ENCODE measurements at regions of chr7 and their contacts with region 1.

Region 1: GRCh38 chr7:152336754-152337368 is 98.9 kb downstream of the KMT2C start:
- DNase-seq: peak in 1 of 2 donors; percentile 26
- ATAC-seq: peak; percentile 76 to 80
- H3K4me3 ChIP-seq: peak overlapping the region in 1 of 4 donors; percentile 34
- H3K27ac ChIP-seq: no peak overlapping the region
- H3K4me1 ChIP-seq: peaks cover 49 to 51% of the 10 kb centered on the region in 2 donors
- H3K27me3 ChIP-seq: no peaks in the 10 kb centered on the region
- CTCF ChIP-seq: peak; percentile 29 to 59 (median 56)
- POLR2A ChIP-seq: no peak

Region 2: DNA sequence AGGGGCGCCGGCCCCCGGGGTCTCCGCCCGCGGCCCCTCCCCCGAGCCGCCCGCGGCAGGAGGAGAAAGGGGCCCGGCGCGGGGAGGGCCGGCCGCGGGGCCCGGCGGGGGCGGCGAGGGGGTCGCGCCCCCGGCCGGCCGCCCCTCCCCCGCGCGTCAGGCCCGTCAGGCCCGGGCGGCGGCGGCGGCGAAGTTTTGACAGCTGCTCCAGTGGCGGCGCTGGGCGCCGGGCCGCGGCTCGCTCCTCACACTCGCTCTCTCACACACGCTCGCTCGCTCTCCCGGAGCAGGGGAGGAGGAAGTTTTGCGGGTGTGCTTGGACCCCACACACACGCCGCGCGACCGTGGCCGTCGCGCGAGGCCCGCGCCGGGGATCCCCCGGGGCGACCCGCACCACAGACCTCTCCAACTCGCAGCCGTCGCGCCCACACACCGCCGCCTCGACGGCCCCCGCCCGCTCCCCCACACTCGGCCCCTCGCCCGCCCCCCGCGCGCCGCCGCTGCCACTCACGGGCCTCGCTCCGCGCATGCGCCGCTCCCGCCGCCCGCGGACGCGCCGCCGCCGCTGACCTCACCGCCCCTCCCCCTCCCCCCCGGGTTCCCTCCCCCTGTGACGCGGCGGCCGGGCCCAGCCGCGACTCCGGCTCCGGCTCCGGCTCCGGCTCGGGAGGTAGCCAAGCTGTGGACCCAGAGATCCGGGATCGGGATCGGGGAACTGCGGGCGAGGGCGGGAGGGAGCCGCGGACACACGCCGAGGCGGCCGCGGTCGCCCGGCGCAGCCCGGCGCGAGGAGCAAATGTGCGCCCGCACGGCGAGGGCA is 99.5 kb after region 1 on chr7:
- in situ Hi-C with region 1: no loop called
- intact Hi-C with region 1: loop called (anchors 2 kb)
- DNase-seq: peak; percentile 90 to 94
- ATAC-seq: peak; percentile 66 to 70
- H3K4me3 ChIP-seq: peak overlapping the region; percentile 60 to 99 (median 82)
- H3K27ac ChIP-seq: peak overlapping the region; percentile 92 to 100 (median 99)
- H3K4me1 ChIP-seq: peaks cover 24 to 40% of the 10 kb centered on the region in 2 donors
- H3K27me3 ChIP-seq: no peaks in the 10 kb centered on the region
- CTCF ChIP-seq: no peak
- POLR2A ChIP-seq: peak; percentile 57 to 59

Region 3: DNA sequence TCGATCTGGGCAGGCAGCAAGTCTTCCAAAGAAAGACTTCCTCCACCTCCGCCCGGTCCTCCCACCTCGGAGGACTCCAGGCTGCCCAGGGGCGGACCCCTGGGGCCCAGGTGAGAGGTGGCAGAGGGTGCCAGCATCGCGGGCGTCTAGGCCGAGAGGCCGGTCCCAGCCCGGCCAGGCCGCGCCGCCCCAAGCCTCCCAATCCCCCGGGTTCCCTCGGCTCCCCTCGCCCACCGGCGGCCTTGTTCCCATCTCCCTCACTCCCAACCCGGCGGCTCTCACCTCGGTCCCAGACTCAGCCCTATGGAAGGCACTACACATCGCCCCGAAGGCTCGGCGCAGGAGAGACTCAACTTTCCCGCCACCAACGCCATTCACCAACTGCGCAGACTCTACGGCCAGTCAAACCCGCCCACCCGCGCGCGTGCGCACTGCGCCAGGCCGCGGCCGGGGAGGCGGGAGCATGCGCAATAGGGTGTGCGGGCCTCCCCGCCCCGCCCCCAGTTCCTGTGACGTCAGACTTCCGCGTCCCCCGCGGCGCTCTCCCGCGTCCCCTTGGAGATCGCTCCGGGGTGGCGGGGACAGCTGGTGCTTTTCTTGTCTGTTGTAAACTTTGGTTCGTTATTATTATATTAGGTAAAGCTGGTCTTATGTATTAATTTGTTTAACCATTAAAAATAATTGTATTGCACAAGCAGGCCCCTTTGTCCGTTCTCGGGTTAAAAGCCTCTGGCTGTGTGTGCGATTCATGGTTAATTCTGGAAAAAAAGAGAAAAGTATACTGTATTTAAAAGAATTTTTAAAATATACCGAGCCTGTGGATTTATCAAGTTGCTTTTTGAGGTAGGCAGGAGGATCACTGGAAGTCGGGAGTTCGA is 339.1 kb after region 1 on chr7 and contains the start of gene XRCC2:
- in situ Hi-C with region 1: loop called in 1 of 4 experiments (anchors 25 kb)
- intact Hi-C with region 1: no loop called
- DNase-seq: peak; percentile 81 to 86
- ATAC-seq: peak; percentile 99
- H3K4me3 ChIP-seq: peak within 1 kb of the TSS; percentile 67 to 78 (median 70)
- H3K27ac ChIP-seq: peak within 1 kb of the TSS; percentile 85 to 87 (median 86)
- H3K4me1 ChIP-seq: peaks cover 7 to 12% of the 10 kb centered on the region in 2 donors
- H3K27me3 ChIP-seq: no peaks in the 10 kb centered on the region
- CTCF ChIP-seq: no peak
- POLR2A ChIP-seq: peak; percentile 56 to 68
- total RNA-seq, gene XRCC2: 0.07 to 0.41 (median 0.20) TPM in 3 of 4 donors, not detected in the other

Region 4: DNA sequence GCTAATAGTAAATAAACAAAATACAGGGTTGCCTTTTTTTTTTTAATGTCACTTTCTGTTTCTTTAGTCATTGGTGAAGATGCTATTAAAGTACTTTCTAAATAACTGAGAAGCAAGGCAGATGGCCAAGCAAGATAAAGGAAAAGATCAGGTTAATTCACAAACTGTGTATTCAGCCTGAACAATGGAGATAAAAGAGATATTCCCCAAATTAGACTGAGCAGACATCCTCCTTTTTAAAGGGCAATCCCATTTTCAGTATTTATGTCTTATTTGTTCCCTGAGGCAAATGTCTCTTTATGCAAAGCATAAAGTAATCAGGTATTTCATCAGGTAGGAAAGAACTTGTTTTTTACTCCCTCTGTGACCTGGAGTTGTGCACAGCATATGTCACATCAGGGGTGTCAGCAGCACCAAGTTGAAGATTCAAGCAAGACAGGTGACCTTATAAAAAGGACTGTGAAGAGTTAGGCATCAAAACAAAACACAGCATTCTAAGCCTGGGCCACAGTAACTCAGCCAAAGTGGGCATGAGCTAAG is 362.3 kb after region 1 on chr7:
- in situ Hi-C with region 1: loop called in 3 of 4 experiments (anchors 10 to 25 kb)
- intact Hi-C with region 1: loop called (anchors 2 kb)
- DNase-seq: no peak
- ATAC-seq: no peak
- H3K4me3 ChIP-seq: peak overlapping the region; percentile 18 to 51 (median 32)
- H3K27ac ChIP-seq: peak overlapping the region; percentile 81 to 86 (median 83)
- H3K4me1 ChIP-seq: peaks cover 15 to 16% of the 10 kb centered on the region in 2 donors
- H3K27me3 ChIP-seq: no peaks in the 10 kb centered on the region
- CTCF ChIP-seq: no peak
- POLR2A ChIP-seq: no peak

Region 5: DNA sequence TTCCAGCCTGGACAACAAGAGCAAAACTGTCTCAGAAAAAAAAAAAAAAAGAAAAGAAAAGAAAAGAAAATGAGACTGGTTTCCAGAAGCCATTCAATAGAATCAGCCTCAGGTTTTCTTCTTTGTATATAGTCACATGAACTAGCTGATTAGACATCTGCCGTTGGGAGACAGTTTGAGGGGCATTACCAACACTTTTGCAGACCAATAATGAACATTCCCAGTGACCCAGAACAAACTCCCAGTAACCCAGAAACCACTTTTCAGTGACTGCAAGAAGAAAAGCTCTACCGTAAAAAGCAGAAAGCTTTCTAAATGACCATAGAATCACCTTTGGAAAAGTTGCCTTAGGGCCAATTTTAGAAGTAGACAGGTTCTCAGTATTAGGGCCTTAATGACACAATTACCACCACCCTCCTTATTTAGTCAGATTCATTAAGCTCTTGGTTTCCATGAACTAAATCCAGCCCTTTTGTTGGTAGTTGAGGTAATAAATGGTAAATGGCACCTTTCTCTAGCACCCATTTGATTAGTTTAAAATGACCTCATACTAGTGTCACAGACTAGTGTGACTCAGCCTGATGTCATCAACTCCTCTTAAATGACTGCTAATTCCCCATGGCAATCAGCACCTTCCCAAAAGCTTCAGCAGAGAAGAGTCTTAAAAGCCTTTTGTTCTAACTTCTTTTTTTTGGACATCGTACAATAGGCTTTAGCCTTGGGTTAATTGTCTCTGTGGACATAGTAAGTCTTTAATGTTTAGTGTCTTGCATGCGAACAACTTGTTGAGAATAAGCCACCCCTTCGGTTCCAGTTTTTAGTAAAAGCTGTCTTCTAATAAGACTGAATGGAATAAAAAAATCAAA is 372.7 kb after region 1 on chr7:
- in situ Hi-C with region 1: loop called in 3 of 4 experiments (anchors 10 to 25 kb)
- intact Hi-C with region 1: loop called (anchors 2 kb)
- DNase-seq: no peak
- ATAC-seq: no peak
- H3K4me3 ChIP-seq: no peak overlapping the region
- H3K27ac ChIP-seq: no peak overlapping the region
- H3K4me1 ChIP-seq: peaks cover 3 to 5% of the 10 kb centered on the region in 2 donors
- H3K27me3 ChIP-seq: no peaks in the 10 kb centered on the region
- CTCF ChIP-seq: no peak
- POLR2A ChIP-seq: no peak

Measured in gastrocnemius medialis (tissue), 4 donors.